ENCODE measurements at regions of chr9 and their contacts with region 1.

Region 1: DNA sequence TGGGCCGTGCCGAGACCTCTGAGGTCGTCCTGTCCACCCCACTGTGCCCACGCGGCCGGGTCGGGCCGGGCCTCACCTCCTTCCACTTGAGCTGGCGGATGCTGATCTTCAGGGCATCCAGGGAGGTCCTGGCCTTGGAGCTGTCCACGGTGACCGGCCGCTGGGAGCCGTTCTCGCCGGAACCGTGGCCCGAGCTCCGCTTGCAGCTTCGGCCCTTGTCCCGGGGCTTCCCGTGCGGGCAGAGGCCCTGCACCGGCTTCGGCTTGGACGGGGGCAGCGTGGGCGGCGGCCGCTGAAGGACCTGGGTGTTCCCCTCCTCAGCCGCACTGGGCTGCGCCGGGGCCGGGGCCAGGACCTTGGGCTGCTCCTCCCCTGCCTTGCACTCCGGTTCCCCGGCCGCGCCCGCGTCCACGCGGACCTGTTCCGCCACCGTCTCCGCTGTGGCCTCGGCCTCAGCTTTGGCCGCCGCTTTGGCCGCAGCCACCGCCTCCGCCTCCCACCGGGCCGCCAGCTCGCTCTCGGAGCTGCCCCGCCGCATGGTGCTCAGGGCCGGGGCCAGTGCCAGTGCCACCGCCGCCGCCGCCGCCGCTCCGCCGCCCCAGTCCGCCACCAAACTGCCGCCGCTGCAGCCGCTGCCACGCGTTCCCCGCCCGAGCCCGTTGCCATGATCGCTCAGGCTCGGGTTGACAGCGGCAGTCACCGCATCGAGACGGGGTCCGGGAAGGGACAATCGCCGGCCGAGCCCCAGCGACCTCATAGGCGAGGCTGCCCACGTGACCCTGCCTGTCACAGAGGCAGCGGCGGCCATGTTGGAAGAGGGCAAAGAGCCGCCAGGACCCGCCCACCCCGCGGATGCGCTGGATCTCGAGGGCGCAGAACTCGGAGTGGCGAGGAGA is at the start of gene TTLL11:
- DNase-seq: peak; percentile 95 to 97 (median 96)
- H3K4me3 ChIP-seq: peak within 1 kb of the TSS; percentile 56 to 62
- H3K4me3 Mint-ChIP-seq: peak within 1 kb of the TSS; percentile 87 to 97 (median 93)
- H3K27ac ChIP-seq: peak within 1 kb of the TSS; percentile 48
- H3K27ac Mint-ChIP-seq: peak within 1 kb of the TSS; percentile 63 to 94 (median 88)
- H3K4me1 ChIP-seq: peaks cover 30% of the 10 kb centered on the region
- H3K4me1 Mint-ChIP-seq: peaks cover 34 to 57% (median 39%) of the 10 kb centered on the region in 4 donors
- H3K27me3 ChIP-seq: no peaks in the 10 kb centered on the region
- H3K27me3 Mint-ChIP-seq: peaks cover 0 to 3% of the 10 kb centered on the region in 2 donors
- total RNA-seq, gene TTLL11: 2.9 to 3.2 TPM

Region 2: GRCh38 chr9:122056484-122056883 is 36.4 kb before region 1 on chr9:
- CTCF ChIA-PET with region 1: no interaction called
- POLR2A ChIA-PET with region 1: no interaction called
- intact Hi-C with region 1: no loop called
- DNase-seq: no peak
- H3K4me3 ChIP-seq: no peak overlapping the region
- H3K4me3 Mint-ChIP-seq: peak overlapping the region in 1 of 8 donors; percentile 33
- H3K27ac ChIP-seq: no peak overlapping the region
- H3K27ac Mint-ChIP-seq: no peak overlapping the region
- H3K4me1 ChIP-seq: no peaks in the 10 kb centered on the region
- H3K4me1 Mint-ChIP-seq: peaks cover 0 to 9% (median 3%) of the 10 kb centered on the region in 4 donors
- H3K27me3 ChIP-seq: no peaks in the 10 kb centered on the region
- H3K27me3 Mint-ChIP-seq: no peaks in the 10 kb centered on the region

Region 3: GRCh38 chr9:122125158-122125508 is 32.3 kb after region 1 on chr9:
- CTCF ChIA-PET with region 1: interaction called, 160 read pairs
- POLR2A ChIA-PET with region 1: interaction called, 3 read pairs
- intact Hi-C with region 1: no loop called
- DNase-seq: peak; percentile 65 to 75 (median 68)
- H3K4me3 ChIP-seq: no peak overlapping the region
- H3K4me3 Mint-ChIP-seq: peak overlapping the region in 6 of 8 donors; percentile 42 to 71 (median 60)
- H3K27ac ChIP-seq: no peak overlapping the region
- H3K27ac Mint-ChIP-seq: peak overlapping the region in 1 of 7 donors; percentile 26
- H3K4me1 ChIP-seq: peaks cover 7% of the 10 kb centered on the region
- H3K4me1 Mint-ChIP-seq: peaks cover 11 to 25% (median 18%) of the 10 kb centered on the region in 4 donors
- H3K27me3 ChIP-seq: peaks cover 11% of the 10 kb centered on the region
- H3K27me3 Mint-ChIP-seq: peaks cover 21 to 28% of the 10 kb centered on the region in 2 donors

Region 4: DNA sequence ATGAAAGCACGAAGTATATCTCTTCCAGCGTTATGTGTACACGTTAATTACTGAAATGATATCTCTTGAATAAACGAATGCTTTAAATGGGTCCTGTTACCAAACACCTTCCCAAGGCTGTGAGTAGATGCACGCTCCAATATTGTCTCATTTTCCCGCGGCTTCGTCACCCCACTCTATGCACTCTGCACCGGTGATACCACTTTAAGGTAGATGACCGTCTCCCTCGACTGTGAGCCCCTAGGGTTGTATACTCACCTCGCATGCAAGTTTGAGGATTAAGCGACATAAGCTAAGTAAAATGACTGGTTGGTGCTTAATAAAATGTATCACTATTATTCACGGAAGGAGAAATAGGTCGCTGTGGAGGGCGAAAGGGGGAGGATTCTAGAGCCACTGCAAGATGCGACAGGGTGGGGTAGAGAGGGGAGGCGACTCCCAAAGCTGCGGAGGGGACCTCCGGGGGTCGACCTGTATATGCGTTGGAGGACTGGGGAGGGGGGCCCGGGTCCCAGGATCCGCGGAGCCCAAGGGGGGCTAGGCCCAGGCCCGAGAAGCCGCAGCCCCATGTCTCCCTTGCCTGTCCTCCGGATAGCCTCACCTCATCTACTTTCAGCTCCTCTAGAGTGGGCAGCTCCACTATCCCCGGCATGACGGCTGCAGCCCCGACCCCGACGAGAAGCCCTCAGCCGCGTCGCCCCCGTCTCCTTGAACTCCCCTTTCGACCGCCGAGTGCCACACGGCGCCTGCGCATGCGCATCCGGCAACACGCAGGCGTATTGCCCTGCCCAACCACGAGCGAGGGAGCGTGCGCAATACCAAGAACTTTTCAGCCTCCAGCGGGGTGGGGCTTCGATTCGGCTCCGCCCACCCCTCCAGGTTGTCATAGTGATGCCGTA is 66.4 kb after region 1 on chr9 and contains the starts of genes MORN5 and NDUFA8:
- CTCF ChIA-PET with region 1: interaction called, 16 read pairs
- POLR2A ChIA-PET with region 1: no interaction called
- intact Hi-C with region 1: loop called (anchors 1 kb)
- DNase-seq: peak; percentile 94 to 96 (median 95)
- H3K4me3 ChIP-seq: peak within 1 kb of the TSS; percentile 89 to 93
- H3K4me3 Mint-ChIP-seq: peak within 1 kb of the TSS; percentile 95 to 99 (median 98)
- H3K27ac ChIP-seq: peak within 1 kb of the TSS; percentile 82
- H3K27ac Mint-ChIP-seq: peak within 1 kb of the TSS; percentile 82 to 99 (median 97)
- H3K4me1 ChIP-seq: peaks cover 25% of the 10 kb centered on the region
- H3K4me1 Mint-ChIP-seq: peaks cover 29 to 48% (median 35%) of the 10 kb centered on the region in 4 donors
- H3K27me3 ChIP-seq: no peaks in the 10 kb centered on the region
- H3K27me3 Mint-ChIP-seq: peaks cover 8 to 10% of the 10 kb centered on the region in 2 donors
- total RNA-seq, gene MORN5: not detected
- total RNA-seq, gene NDUFA8: 17.6 to 20.4 TPM

Region 5: GRCh38 chr9:122264360-122265148 is 171.7 kb after region 1 on chr9 and contains the starts of genes MRRF and RBM18:
- CTCF ChIA-PET with region 1: no interaction called
- POLR2A ChIA-PET with region 1: interaction called, 3 read pairs
- intact Hi-C with region 1: loop called (anchors 1 kb)
- DNase-seq: peak; percentile 86 to 91 (median 88)
- H3K4me3 ChIP-seq: peak within 1 kb of the TSS; percentile 93 to 94
- H3K4me3 Mint-ChIP-seq: peak within 1 kb of the TSS; percentile 90 to 99 (median 98)
- H3K27ac ChIP-seq: peak within 1 kb of the TSS; percentile 97
- H3K27ac Mint-ChIP-seq: peak within 1 kb of the TSS; percentile 94 to 100 (median 100)
- H3K4me1 ChIP-seq: peaks cover 50% of the 10 kb centered on the region
- H3K4me1 Mint-ChIP-seq: peaks cover 34 to 68% (median 49%) of the 10 kb centered on the region in 4 donors
- H3K27me3 ChIP-seq: no peaks in the 10 kb centered on the region
- H3K27me3 Mint-ChIP-seq: no peaks in the 10 kb centered on the region
- total RNA-seq, gene MRRF: 26.8 to 27.3 TPM
- total RNA-seq, gene RBM18: 21.3 to 21.4 TPM

Measured in CD4-positive, alpha-beta memory T cell (primary cell).